ENCODE measurements at regions of chr12 and their contacts with region 1.

Region 1: GRCh38 chr12:12334367-12335040 is 15.5 kb downstream of the MANSC1 start:
- DNase-seq: peak in 1 of 2 donors; percentile 20
- ATAC-seq: peak; percentile 42 to 60
- H3K4me3 ChIP-seq: no peak overlapping the region
- H3K27ac ChIP-seq: no peak overlapping the region
- H3K4me1 ChIP-seq: peaks cover 0 to 6% of the 10 kb centered on the region in 2 donors
- H3K27me3 ChIP-seq: no peaks in the 10 kb centered on the region
- CTCF ChIP-seq: peak; percentile 63 to 90 (median 72)
- POLR2A ChIP-seq: no peak

Region 2: DNA sequence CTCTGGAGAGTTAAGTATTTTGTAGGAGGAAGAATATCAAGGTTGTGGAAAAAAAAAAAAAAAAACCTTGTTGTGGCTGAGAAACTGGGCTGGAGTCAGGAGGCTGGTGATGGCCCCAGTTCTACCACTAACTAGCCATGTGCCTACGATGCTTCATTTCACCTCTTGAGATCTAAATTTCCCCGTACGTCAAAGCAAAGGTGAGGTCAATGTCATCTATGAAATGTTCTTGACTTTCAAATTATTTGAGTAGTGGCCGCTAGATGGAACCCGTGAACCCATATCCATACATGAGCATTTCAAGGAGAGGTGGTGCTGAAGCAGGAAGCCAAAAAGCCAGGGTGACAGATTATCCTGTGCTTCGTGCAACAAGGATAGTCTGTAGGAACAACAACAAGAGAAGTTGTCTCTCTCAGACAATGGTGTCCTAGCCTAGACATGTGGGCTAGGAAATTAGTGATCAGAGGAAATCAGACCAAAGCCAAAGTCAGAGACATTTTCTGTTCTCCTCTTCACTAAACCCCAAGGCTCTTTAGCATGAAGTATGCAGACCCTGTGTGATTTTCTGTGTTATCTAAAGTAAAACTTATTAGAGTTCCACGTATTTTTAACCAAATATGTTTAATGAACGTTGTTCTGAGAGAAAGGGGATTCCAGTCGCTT is 780.5 kb before region 1 on chr12:
- in situ Hi-C with region 1: loop called in 1 of 4 experiments (anchors 25 kb)
- intact Hi-C with region 1: no loop called
- DNase-seq: no peak
- ATAC-seq: no peak
- H3K4me3 ChIP-seq: no peak overlapping the region
- H3K27ac ChIP-seq: no peak overlapping the region
- H3K4me1 ChIP-seq: no peaks in the 10 kb centered on the region
- H3K27me3 ChIP-seq: no peaks in the 10 kb centered on the region
- CTCF ChIP-seq: peak in 2 of 5 experiments; percentile 22 to 51
- POLR2A ChIP-seq: no peak

Region 3: GRCh38 chr12:12081836-12082497 is 252.5 kb before region 1 on chr12:
- in situ Hi-C with region 1: loop called (anchors 5 to 25 kb)
- intact Hi-C with region 1: loop called (anchors 2 kb)
- DNase-seq: no peak
- ATAC-seq: peak; percentile 74 to 82
- H3K4me3 ChIP-seq: no peak overlapping the region
- H3K27ac ChIP-seq: peak overlapping the region in 3 of 4 donors; percentile 6 to 52 (median 21)
- H3K4me1 ChIP-seq: no peaks in the 10 kb centered on the region
- H3K27me3 ChIP-seq: no peaks in the 10 kb centered on the region
- CTCF ChIP-seq: peak in 4 of 5 experiments; percentile 8 to 41 (median 22)
- POLR2A ChIP-seq: no peak

Region 4: GRCh38 chr12:12086973-12087692 is 247.4 kb before region 1 on chr12:
- in situ Hi-C with region 1: loop called (anchors 5 to 25 kb)
- intact Hi-C with region 1: loop called (anchors 2 kb)
- DNase-seq: no peak
- ATAC-seq: no peak
- H3K4me3 ChIP-seq: no peak overlapping the region
- H3K27ac ChIP-seq: no peak overlapping the region
- H3K4me1 ChIP-seq: no peaks in the 10 kb centered on the region
- H3K27me3 ChIP-seq: no peaks in the 10 kb centered on the region
- CTCF ChIP-seq: no peak
- POLR2A ChIP-seq: no peak

Measured in gastrocnemius medialis (tissue), 4 donors.